ENCODE measurements at regions of chr3 and their contacts with region 1.

Region 1: GRCh38 chr3:107414325-107414964 is 37.2 kb downstream of the CCDC54 start:
- DNase-seq: no peak
- H3K4me3 ChIP-seq: no peak overlapping the region
- H3K27ac ChIP-seq: no peak overlapping the region
- H3K4me1 ChIP-seq: no peaks in the 10 kb centered on the region
- H3K27me3 ChIP-seq: no peaks in the 10 kb centered on the region
- CTCF ChIP-seq: no peak
- EP300 ChIP-seq: no peak
- POLR2A ChIP-seq: no peak

Region 2: GRCh38 chr3:107251819-107252218 is 162.6 kb before region 1 on chr3:
- intact Hi-C with region 1: loop called (anchors 10 kb)
- DNase-seq: no peak
- H3K4me3 ChIP-seq: no peak overlapping the region
- H3K27ac ChIP-seq: no peak overlapping the region
- H3K4me1 ChIP-seq: no peaks in the 10 kb centered on the region
- H3K27me3 ChIP-seq: no peaks in the 10 kb centered on the region
- CTCF ChIP-seq: no peak
- EP300 ChIP-seq: no peak
- POLR2A ChIP-seq: no peak

Region 3: DNA sequence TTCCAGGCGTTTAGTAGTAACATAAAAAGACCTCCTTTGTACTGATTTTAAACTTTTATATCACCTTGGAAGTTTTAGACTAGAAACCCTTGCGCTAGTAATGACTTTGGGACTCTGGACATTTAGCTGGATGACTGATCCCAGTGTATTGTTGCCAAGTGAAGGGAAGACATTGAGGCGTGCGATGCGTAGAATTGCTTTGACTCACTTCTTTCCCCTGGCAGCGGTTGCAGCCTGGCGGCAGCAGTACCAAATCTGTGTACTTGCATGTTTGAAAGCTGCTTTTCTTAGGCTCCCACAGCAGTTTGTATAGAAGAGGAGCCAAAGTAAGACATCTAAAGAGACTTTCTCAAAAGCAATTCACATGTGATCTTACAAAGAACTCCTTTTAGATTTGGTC is 259.9 kb after region 1 on chr3:
- intact Hi-C with region 1: no loop called
- DNase-seq: peak in 1 of 2 donors; percentile 20
- H3K4me3 ChIP-seq: no peak overlapping the region
- H3K27ac ChIP-seq: no peak overlapping the region
- H3K4me1 ChIP-seq: peaks cover 0 to 24% (median 8%) of the 10 kb centered on the region in 4 donors
- H3K27me3 ChIP-seq: no peaks in the 10 kb centered on the region
- CTCF ChIP-seq: no peak
- EP300 ChIP-seq: no peak
- POLR2A ChIP-seq: no peak

Measured in stomach (tissue), 19 donors.